A549 (cell line): ENCODE measurements at regions of chr17 and their contacts with region 1.

Region 1: DNA sequence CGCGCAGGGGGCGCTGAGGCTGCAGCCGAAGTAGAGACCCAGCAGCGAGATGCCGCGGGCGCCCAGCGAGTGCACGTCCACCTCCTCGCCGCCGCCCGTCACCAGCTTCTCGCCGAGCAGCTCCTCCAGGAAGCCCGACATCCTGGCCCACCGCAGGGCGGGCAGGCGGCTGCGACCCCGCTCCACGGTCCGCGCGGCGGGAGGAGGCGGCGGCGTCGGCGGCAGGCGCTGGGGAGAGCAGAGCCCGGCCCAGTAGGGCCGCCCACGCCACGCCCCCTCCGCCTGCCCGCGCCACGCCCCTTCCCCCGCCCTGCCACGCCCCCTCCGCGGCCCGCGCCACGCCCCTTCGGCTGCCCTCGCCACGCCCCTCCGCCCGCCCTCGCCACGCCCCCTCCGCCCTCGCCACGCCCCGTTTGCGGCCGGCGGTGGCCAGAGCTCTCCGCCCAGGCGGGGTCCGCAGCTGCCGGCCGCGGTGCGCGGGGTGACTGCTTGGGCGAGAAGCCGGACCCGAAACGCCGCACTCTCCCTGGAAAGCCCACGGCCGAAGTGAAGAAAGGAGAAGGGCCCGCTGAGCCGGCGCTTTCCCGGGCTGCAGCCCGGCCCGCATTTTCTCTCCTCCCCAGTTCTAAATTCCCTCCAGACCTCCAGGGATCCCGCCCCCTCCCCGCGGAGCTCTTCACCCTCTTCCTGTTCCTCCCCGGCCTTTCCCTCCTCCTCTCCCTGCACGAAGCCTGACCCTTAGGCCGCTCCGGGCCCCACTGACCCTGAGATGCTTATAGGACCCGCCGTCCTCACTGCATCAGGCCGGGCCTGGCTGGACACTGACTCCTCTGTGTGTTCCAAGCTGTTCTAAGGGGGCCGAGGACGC is at the start of gene NXN:
- DNase-seq: peak; percentile 65 to 82
- ATAC-seq: peak; percentile 76 to 85
- H3K4me3 ChIP-seq: peak within 1 kb of the TSS; percentile 89
- H3K27ac ChIP-seq: peak within 1 kb of the TSS; percentile 76 to 91
- H3K4me1 ChIP-seq: peaks cover 16% of the 10 kb centered on the region; the same call in 2 of the 3 replicates
- CTCF ChIP-seq: peak; percentile 48
- EP300 ChIP-seq: no peak
- POLR2A ChIP-seq: peak; percentile 72
- RAD21 ChIP-seq: peak; percentile 19 to 56; a peak in 3 of 5 replicates
- polyA plus RNA-seq, gene NXN: 22.2 and 24.6 TPM in 2 replicates

Region 2: GRCh38 chr17:752002-752619 is 227.7 kb before region 1 on chr17 and contains the start of gene GEMIN4:
- CTCF ChIA-PET with region 1: interaction called, 41 read pairs
- POLR2A ChIA-PET with region 1: no interaction called
- DNase-seq: peak; percentile 94 to 95
- ATAC-seq: peak; percentile 79 to 91
- H3K4me3 ChIP-seq: peak within 1 kb of the TSS; percentile 97
- H3K27ac ChIP-seq: peak within 1 kb of the TSS; percentile 97 to 98
- H3K4me1 ChIP-seq: peaks cover 10% of the 10 kb centered on the region
- CTCF ChIP-seq: peak; percentile 97
- EP300 ChIP-seq: no peak
- POLR2A ChIP-seq: peak; percentile 92
- RAD21 ChIP-seq: peak; percentile 32 to 64; a peak in 4 of 5 replicates
- polyA plus RNA-seq, gene GEMIN4: 36.1 and 51.8 TPM in 2 replicates

Region 3: DNA sequence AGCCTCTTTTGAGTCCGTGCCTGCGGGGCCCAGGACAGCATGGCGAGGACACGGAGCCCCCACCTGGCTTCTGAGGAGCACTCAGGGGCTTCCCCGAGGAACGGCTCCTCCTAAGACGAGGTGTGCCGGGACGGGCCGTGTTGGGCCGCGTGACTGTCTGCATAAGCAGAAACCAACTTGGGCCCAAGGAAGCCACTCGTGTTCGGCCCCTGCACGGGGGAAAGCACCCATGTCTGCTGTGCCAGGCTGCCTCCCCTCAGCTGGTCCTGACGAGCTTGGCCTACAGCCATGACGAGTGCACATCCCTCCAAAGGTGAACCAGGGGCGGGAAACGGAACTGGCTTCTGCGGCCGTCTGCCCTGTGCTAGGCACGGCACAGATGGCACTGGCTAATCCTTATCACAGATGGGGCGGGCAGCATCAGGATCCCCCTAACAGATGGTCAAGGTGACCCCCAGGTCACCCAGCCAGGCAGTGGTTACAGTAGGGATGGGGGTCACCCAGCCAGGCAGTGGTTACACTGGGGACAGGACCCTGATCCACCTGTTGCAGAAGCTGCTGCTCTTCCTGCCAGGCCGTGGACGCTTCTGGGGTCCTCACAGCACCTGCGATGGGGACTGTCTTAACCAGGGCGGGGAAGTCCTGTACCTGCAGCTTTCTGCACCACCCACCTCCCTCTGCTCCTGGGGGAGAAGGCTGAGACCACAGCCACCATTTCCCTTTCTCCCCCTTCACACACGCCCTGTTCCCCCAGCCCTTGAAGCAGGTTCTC is 172.1 kb before region 1 on chr17:
- CTCF ChIA-PET with region 1: interaction called, 428 read pairs
- POLR2A ChIA-PET with region 1: no interaction called
- DNase-seq: no peak
- ATAC-seq: no peak
- H3K4me3 ChIP-seq: no peak overlapping the region
- H3K27ac ChIP-seq: no peak overlapping the region
- H3K4me1 ChIP-seq: no peaks in the 10 kb centered on the region
- CTCF ChIP-seq: no peak
- EP300 ChIP-seq: no peak
- POLR2A ChIP-seq: no peak
- RAD21 ChIP-seq: no peak

Region 4: GRCh38 chr17:879549-880442 is 100.0 kb before region 1 on chr17:
- CTCF ChIA-PET with region 1: interaction called, 90 read pairs
- POLR2A ChIA-PET with region 1: interaction called, 7 read pairs
- DNase-seq: peak; percentile 67 to 85
- ATAC-seq: peak; percentile 80 to 81
- H3K4me3 ChIP-seq: no peak overlapping the region
- H3K27ac ChIP-seq: no peak overlapping the region
- H3K4me1 ChIP-seq: peaks cover 25% of the 10 kb centered on the region; the same call in 2 of the 3 replicates
- CTCF ChIP-seq: peak; percentile 57
- EP300 ChIP-seq: no peak
- POLR2A ChIP-seq: no peak
- RAD21 ChIP-seq: peak; percentile 64 to 66

Region 5: GRCh38 chr17:933312-934083 is 46.3 kb before region 1 on chr17:
- CTCF ChIA-PET with region 1: interaction called, 52 read pairs
- POLR2A ChIA-PET with region 1: interaction called, 4 read pairs
- DNase-seq: peak; percentile 89 to 97
- ATAC-seq: peak; percentile 93
- H3K4me3 ChIP-seq: no peak overlapping the region
- H3K27ac ChIP-seq: peak overlapping the region; percentile 74 to 84
- H3K4me1 ChIP-seq: peaks cover 69% of the 10 kb centered on the region
- CTCF ChIP-seq: no peak
- EP300 ChIP-seq: peak; percentile 85 to 96
- POLR2A ChIP-seq: no peak
- RAD21 ChIP-seq: peak in 1 of 2 experiments; percentile 46; a peak in 1 of 5 replicates

Region 6: GRCh38 chr17:996554-997344 is 17.0 kb after region 1 on chr17 and contains the start of gene TIMM22:
- CTCF ChIA-PET with region 1: interaction called, 121 read pairs
- POLR2A ChIA-PET with region 1: interaction called, 6 read pairs
- DNase-seq: peak; percentile 98 to 100
- ATAC-seq: peak; percentile 97 to 98
- H3K4me3 ChIP-seq: peak within 1 kb of the TSS; percentile 88
- H3K27ac ChIP-seq: peak within 1 kb of the TSS; percentile 84 to 93
- H3K4me1 ChIP-seq: peaks cover 24% of the 10 kb centered on the region
- CTCF ChIP-seq: peak; percentile 97
- EP300 ChIP-seq: no peak
- POLR2A ChIP-seq: peak; percentile 92
- RAD21 ChIP-seq: peak; percentile 95 to 97
- polyA plus RNA-seq, gene TIMM22: 14.7 and 15.8 TPM in 2 replicates